ENCODE measurements at regions of chr1 and their contacts with region 1.

Region 1: GRCh38 chr1:152182431-152182830 is 23.4 kb upstream of the RPTN start:
- DNase-seq: no peak
- H3K4me3 ChIP-seq: no peak overlapping the region
- H3K27ac ChIP-seq: no peak overlapping the region
- H3K4me1 ChIP-seq: peaks cover 0 to 9% of the 10 kb centered on the region in 2 donors
- H3K27me3 ChIP-seq: no peaks in the 10 kb centered on the region
- CTCF ChIP-seq: peak in 1 of 6 experiments; percentile 20
- POLR2A ChIP-seq: no peak

Region 2: GRCh38 chr1:152148981-152149380 is 33.5 kb before region 1 on chr1:
- intact Hi-C with region 1: loop called (anchors 5 kb)
- DNase-seq: no peak
- H3K4me3 ChIP-seq: no peak overlapping the region
- H3K27ac ChIP-seq: no peak overlapping the region
- H3K4me1 ChIP-seq: no peaks in the 10 kb centered on the region
- H3K27me3 ChIP-seq: no peaks in the 10 kb centered on the region
- CTCF ChIP-seq: no peak
- POLR2A ChIP-seq: no peak

Region 3: GRCh38 chr1:152459596-152460528 is 277.4 kb after region 1 on chr1:
- intact Hi-C with region 1: loop called (anchors 5 kb)
- DNase-seq: peak; percentile 61 to 72
- H3K4me3 ChIP-seq: no peak overlapping the region
- H3K27ac ChIP-seq: no peak overlapping the region
- H3K4me1 ChIP-seq: no peaks in the 10 kb centered on the region
- H3K27me3 ChIP-seq: no peaks in the 10 kb centered on the region
- CTCF ChIP-seq: peak; percentile 14 to 75 (median 42)
- POLR2A ChIP-seq: no peak